RWPE1 (cell line): ENCODE measurements at regions of chr15 and their contacts with region 1.

Region 1: GRCh38 chr15:75453703-75454470 is 2.4 kb upstream of the SIN3A start:
- DNase-seq: peak; percentile 97
- H3K27ac ChIP-seq: peak overlapping the region; percentile 99
- CTCF ChIP-seq: no peak

Region 2: GRCh38 chr15:75723847-75724660 is 270.2 kb after region 1 on chr15:
- CTCF ChIA-PET with region 1: no interaction called
- POLR2A ChIA-PET with region 1: interaction called, 11 read pairs
- DNase-seq: peak; percentile 97
- H3K27ac ChIP-seq: peak overlapping the region; percentile 85
- CTCF ChIP-seq: no peak